Gastrocnemius medialis (tissue), 4 donors: ENCODE measurements at regions of chr1 and their contacts with region 1.

Region 1: DNA sequence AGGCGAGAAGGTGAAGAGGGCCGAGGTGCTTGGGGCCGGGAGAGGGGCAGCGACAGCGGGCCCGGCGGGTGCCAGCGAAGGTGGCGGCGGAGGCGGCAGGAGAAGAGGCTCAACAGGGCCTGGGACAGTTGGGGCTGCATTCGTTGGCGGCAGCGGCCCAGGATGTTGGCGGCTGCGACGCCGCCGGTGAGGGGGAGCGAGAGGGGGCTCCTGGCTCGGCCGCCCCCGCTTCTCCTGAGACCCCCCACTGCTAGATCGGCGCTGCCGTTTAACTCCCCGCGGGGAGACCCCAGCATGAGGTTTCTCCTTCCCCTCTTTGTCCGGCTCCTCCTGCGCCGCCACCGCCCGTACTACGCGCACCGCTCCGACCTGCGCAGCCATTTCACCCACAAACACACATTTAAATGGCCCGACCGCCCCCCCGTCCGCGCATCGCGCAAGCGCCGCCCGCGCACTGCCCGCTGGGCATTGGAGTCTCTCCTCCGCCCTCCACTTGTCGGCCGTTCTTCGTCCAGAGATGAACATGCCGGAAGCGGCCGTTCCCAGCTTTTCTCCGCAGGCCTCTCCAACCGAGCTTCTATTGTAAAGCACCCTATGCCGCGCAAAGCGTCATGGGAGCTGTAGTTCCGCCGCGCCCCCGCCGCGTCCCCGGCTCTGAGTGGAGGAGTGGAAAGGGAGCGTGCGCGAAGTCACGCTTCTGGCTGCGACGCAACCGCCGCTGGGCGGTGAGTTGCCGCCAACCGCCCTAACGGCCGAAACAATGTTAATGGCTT is at the start of gene RSBN1:
- DNase-seq: peak; percentile 99
- ATAC-seq: peak; percentile 97 to 99
- H3K4me3 ChIP-seq: peak within 1 kb of the TSS; percentile 86 to 96 (median 91)
- H3K27ac ChIP-seq: peak within 1 kb of the TSS; percentile 94 to 98 (median 96)
- H3K4me1 ChIP-seq: peaks cover 23 to 38% of the 10 kb centered on the region in 2 donors
- H3K27me3 ChIP-seq: no peaks in the 10 kb centered on the region
- CTCF ChIP-seq: peak in 2 of 5 experiments; percentile 12 to 34
- POLR2A ChIP-seq: peak; percentile 91 to 99
- total RNA-seq, gene RSBN1: 9.9 to 24.8 (median 24.0) TPM

Region 2: DNA sequence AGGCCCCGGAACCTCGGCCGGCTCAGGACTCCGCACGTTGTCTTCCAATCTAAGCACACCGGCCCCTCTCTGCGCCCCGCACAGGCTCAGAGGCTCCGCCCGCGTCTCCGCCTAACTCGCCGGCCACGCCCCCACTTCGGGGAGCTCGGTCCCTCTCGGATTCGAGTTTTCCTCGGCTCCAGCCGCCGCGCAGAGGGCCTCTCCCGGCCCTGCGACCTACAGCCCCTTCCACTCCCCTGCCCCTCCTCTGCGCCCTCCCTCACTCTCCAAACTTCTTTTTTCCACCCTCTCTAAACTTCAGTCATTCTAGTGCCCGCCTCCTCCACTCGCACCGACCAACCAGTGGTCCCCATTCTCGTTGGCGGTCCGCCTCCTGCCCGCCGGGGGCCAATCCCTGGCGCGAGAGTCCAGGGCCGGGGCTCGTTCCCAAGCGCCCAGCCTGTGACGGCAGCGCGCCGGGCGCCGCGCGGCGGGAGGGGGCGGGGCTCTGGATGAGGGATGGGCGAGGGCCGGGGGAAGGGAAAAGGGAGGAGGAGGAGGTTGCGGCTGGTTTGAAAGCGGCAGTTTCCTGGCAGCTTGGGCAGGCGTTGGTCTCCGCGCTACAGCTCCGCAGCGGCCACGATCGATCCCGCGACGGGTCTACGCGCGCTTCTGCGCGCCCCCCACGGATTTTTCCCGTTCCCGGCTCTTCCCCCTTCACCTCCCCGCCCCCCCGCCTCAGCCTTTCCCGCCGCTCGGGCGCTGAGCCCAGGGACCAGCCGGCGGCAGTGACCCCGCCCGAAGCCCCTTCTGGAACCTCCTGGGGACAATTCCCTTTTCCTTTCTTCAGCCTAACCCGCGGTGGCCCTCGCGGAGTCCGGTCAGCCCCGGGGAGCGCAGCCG is 421.9 kb before region 1 on chr1 and contains the start of gene MAGI3:
- in situ Hi-C with region 1: no loop called
- intact Hi-C with region 1: loop called (anchors 10 kb)
- DNase-seq: peak; percentile 93 to 94
- ATAC-seq: peak; percentile 88 to 90
- H3K4me3 ChIP-seq: peak within 1 kb of the TSS; percentile 79 to 96 (median 90)
- H3K27ac ChIP-seq: peak within 1 kb of the TSS; percentile 77 to 86 (median 82)
- H3K4me1 ChIP-seq: peaks cover 20 to 24% of the 10 kb centered on the region in 2 donors
- H3K27me3 ChIP-seq: no peaks in the 10 kb centered on the region
- CTCF ChIP-seq: no peak
- POLR2A ChIP-seq: peak; percentile 62 to 76
- total RNA-seq, gene MAGI3: 2.8 to 4.1 (median 4.0) TPM

Region 3: DNA sequence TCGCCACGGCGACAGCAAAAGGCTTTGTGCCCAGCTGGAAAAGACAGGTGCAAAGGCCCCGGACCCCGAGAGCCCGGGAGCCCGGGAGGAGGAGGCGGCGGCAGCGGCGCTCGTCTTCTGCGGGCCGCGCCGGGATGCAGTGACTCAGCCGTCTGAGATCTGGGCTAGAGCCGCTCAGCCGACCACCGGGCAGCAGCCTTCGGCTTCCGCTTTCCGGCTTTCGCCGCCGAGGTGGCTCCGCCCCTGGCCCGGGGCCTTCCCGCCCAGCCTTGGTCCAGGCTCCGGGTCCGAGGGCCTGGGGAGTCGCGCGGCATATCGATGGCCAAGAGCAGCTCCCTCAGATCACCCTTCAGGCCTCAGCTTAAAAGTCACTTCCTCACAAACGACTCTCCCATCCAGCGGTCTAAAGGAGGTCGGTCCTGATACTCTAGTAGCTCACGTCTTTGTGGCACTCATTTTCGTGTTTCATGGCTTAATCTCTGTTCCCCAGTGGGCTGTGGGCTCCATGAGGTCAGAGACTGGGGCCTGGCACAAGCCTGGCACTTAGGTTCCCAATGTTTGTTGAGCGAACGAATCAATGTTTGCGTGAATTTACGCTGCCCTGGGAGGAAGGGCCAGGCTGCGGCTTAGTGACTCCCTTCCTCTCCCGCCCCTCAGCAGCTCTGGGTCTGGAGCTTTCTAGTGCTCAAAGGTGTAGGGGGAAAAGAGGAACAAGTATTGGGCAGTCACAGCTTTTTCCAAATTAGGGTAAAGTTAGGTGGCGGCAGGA is 52.6 kb before region 1 on chr1 and contains the start of gene PHTF1:
- in situ Hi-C with region 1: no loop called
- intact Hi-C with region 1: loop called (anchors 1 kb)
- DNase-seq: peak; percentile 23 to 40
- ATAC-seq: peak; percentile 75 to 80
- H3K4me3 ChIP-seq: peak within 1 kb of the TSS; percentile 77 to 91 (median 90)
- H3K27ac ChIP-seq: peak within 1 kb of the TSS; percentile 84 to 94 (median 89)
- H3K4me1 ChIP-seq: peaks cover 13 to 17% of the 10 kb centered on the region in 2 donors
- H3K27me3 ChIP-seq: no peaks in the 10 kb centered on the region
- CTCF ChIP-seq: no peak
- POLR2A ChIP-seq: peak; percentile 55 to 67
- total RNA-seq, gene PHTF1: 6.7 to 20.0 (median 9.9) TPM

Region 4: DNA sequence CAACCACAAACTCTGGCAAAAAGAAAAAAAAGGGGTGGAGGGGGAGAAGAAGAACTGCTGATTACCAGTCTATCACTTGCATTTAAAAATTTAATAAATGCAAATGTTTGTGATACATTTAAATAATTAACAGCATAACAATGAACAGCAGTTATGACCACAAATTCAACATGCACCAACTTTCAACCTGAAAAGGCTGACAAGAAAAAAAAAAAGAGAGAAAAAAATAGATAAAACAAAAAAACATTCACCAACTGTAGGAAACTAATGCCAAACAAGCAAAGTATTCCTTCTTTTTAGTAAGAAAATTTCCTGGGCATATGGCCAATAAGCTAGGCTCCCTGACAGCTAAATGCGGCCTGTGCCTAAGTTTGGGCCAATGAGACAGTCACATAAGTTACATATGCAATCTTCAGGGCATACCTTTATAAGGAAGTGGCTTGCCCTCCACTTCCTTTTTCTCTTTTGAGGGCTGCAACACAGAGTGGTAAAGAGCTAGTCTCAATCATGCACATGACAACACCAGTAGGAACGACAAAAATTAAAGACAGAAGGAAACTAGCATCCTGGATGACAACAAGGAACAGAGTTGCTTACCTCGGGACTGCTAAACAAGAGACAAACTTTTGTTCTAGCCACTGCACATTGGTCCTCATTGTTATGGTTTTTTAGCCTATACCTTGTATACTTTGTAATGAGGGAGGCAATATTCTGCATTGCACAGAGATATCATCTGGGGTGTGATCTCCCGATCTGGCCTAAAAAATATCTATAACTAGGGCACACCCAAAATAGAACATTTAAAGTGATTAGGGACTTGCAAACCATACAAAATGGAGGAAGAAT is 28.6 kb before region 1 on chr1:
- in situ Hi-C with region 1: no loop called
- intact Hi-C with region 1: loop called (anchors 1 kb)
- DNase-seq: peak in 1 of 2 donors; percentile 24
- ATAC-seq: peak; percentile 25 to 50
- H3K4me3 ChIP-seq: peak overlapping the region in 3 of 4 donors; percentile 3 to 23 (median 19)
- H3K27ac ChIP-seq: peak overlapping the region; percentile 76 to 84 (median 80)
- H3K4me1 ChIP-seq: peaks cover 72 to 74% of the 10 kb centered on the region in 2 donors
- H3K27me3 ChIP-seq: no peaks in the 10 kb centered on the region
- CTCF ChIP-seq: no peak
- POLR2A ChIP-seq: no peak

Region 5: DNA sequence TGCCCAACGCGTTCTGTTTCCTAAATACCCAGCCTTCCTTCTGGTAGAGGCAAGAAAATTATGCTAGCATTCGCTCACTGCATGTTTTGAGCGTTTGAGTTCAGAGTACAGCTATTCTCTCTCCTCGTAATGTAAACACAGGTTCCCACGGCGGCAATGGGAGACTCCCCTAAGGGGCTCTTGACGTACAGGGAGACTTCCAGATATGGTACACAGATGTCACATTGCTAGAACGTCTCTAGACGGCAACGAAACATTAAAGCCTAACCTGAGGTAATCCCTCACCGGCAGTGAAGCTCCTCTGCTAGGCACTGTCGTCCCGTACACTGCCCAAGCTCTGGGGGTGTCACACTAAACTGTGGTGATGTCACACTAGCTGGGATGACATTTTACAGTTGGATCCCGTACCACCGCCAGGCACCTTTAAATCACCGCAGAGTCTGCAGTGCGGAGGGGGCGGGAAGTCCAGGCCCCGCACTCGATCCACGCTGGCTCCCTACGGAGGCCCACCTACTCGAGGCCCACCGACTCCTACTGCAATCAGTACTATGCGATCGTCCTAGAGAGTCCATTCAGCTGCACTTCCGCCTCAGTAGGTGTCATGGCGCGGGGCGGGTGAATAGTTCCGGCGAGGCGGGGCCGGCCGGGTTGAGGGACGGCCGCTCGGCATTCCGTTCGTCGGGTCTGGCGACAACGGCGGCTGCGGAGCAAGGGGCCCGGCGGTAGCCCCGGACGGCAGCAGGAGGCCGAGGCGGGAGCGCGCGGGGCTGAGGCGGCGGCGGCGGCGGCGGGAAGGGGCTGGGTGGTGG is 117.1 kb after region 1 on chr1 and contains the start of gene HIPK1:
- in situ Hi-C with region 1: loop called in 1 of 4 experiments (anchors 10 kb)
- intact Hi-C with region 1: loop called (anchors 1 kb)
- DNase-seq: peak; percentile 86 to 88
- ATAC-seq: peak; percentile 88 to 89
- H3K4me3 ChIP-seq: peak within 1 kb of the TSS; percentile 86 to 98 (median 90)
- H3K27ac ChIP-seq: peak within 1 kb of the TSS; percentile 92 to 98 (median 94)
- H3K4me1 ChIP-seq: peaks cover 45% of the 10 kb centered on the region in 2 donors
- H3K27me3 ChIP-seq: no peaks in the 10 kb centered on the region
- CTCF ChIP-seq: peak in 1 of 5 experiments; percentile 28
- POLR2A ChIP-seq: peak; percentile 79 to 82
- total RNA-seq, gene HIPK1: 54.4 to 67.6 (median 60.0) TPM

Region 6: DNA sequence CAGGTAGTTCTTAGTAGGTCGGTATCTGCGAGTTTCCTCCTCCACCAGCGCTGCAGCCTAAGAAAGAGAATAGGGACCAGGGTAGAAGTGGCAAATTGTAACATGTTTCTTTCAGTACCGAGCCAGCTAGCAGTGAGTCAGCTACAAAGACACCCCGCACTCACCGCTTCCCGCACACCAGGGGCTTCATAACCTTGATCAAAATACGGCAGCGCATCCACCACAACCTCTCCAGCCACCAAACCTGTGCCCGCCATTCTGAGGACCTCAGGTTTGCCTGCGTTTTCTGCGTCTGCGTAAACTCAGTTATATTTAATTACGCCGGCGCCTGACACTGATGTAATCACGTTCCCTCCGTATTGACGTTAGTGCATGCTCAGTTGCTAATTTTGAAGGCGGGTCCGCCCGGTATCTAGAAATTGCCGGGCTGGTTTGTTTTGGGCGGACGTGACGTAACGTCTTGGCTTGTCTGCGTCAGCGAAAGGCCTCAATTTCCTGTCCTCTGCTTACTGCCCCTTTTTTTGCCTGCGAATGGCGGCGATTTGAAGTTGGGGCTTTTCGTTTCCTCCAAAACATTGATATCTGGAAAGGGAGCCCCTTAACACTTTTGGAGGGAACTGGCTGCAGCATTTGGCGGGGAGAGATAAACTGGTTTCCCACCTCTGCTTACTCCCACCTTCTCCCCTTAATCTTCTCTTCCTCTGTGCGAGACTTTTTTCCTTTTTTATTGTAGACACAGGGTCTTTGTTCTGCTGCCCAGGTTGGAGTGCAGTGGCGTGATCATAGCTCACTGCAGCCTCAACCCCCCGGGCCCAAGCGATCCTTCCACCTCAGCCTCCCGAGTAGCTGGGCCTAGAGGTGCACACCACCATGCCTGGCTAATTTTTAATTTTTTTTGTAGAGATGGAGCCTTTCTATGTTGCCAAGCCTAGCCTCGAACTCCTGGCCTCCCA is 769.5 kb after region 1 on chr1 and contains the start of gene BCAS2:
- in situ Hi-C with region 1: no loop called
- intact Hi-C with region 1: loop called (anchors 10 kb)
- DNase-seq: peak; percentile 95 to 97
- ATAC-seq: peak; percentile 99
- H3K4me3 ChIP-seq: peak within 1 kb of the TSS; percentile 64 to 75 (median 70)
- H3K27ac ChIP-seq: peak within 1 kb of the TSS; percentile 87 to 95 (median 92)
- H3K4me1 ChIP-seq: peaks cover 16 to 25% of the 10 kb centered on the region in 2 donors
- H3K27me3 ChIP-seq: no peaks in the 10 kb centered on the region
- CTCF ChIP-seq: no peak
- POLR2A ChIP-seq: peak; percentile 88 to 89
- total RNA-seq, gene BCAS2: 23.7 to 32.8 (median 25.2) TPM